ENCODE measurements at regions of chr16 and their contacts with region 1.

Region 1: DNA sequence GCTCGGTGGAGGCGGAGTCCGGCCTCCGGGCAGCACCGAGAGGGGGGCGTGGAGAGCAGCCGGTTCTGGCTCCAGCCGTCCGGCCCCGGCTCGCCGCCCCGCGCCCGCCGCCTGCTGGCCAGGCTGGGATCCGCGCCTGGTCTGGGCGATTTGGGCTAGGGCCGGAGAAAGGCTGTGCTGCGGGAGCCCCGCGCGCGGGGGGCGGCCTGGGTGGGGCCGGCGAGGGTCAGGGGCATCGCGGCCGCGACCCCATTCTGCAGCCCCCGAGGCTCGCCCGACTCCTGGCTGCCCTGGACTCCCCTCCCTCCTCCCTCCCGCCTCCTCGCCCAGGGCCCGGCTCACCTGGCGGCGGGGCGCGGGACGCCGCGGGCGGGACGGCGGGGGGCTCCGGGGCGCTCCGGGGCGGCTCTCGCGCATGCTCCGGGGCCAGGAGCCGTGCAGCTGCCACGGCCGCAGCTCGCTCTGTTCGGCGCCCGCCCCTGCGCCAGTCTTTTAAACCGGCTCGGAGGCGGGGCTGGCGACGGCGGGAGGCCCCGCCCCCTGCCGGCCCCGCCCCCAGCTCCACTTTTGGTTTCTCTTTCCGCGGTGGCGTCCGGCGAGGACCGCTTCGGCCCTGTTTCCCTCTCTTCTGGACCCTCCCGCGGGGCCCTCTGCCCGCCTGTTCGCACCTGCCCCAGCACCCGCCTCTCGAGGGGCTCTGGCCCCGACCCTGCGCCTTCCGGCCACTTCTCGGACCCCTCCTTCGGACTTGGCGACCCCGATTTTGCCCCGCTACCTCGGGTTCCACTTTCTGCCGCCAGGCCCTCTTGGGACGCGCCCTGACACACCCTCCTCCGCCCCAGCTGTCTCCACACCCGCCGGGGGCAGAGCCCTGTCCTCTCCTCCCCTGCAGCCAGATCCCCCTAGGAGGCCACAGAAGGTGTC is at the start of gene SOCS1:
- DNase-seq: peak; percentile 81 to 83
- ATAC-seq: peak; percentile 67 to 75
- H3K4me3 ChIP-seq: peak within 1 kb of the TSS; percentile 81
- H3K27ac ChIP-seq: peak within 1 kb of the TSS; percentile 94 to 95
- H3K4me1 ChIP-seq: 0 out of 3 replicates have a peak, but pooled peaks cover 5% of the 10 kb centered on the region
- CTCF ChIP-seq: peak; percentile 94
- EP300 ChIP-seq: no peak
- POLR2A ChIP-seq: peak; percentile 99
- RAD21 ChIP-seq: peak; percentile 55 to 79
- polyA plus RNA-seq, gene SOCS1: 0.15 and 0.16 TPM in 2 replicates

Region 2: GRCh38 chr16:10964039-10964890 is 291.7 kb before region 1 on chr16:
- CTCF ChIA-PET with region 1: interaction called, 364 read pairs
- POLR2A ChIA-PET with region 1: interaction called, 9 read pairs
- DNase-seq: peak; percentile 70 to 77
- ATAC-seq: peak; percentile 93 to 99
- H3K4me3 ChIP-seq: no peak overlapping the region
- H3K27ac ChIP-seq: no peak overlapping the region
- H3K4me1 ChIP-seq: 0 out of 3 replicates have a peak, but pooled peaks cover 3% of the 10 kb centered on the region
- CTCF ChIP-seq: peak; percentile 93
- EP300 ChIP-seq: no peak
- POLR2A ChIP-seq: no peak
- RAD21 ChIP-seq: peak; percentile 87 to 88

Region 3: DNA sequence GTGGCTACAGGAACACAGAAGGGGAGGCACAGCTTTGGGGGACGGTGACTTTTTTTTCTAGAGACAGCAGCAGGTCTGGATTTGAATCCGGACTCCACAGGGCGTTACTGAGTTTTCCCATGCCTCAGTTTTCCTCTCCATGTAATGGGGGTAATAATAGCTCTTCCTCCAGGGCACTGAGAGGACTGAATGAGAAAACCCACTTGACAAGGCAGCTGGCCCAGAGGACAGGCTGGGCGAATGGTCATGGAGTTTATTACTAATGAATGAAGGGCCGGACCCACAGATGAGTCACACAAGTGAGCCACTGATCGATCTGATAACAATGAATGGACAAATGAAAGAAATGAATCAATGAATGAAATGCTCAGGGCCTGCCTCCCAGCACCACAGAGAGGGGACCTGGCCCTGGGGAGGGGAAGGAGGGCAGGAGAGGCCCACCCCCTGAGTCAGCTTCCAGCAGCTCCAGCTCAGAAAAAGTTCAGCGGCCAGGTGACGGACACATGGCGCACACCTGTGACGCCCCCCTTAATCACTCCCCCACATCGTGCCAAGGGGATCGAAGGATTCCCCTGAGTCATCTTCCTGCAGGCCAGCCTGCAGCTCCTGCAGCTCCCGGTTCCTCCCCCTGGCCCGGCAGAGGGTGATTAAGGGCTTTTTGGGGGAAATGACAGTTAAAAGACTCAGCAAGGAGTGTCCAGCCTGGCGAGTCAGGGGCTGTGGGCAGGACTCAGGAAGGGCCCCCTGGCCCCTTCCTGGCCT is 54.3 kb before region 1 on chr16:
- CTCF ChIA-PET with region 1: interaction called, 19 read pairs
- POLR2A ChIA-PET with region 1: interaction called, 4 read pairs
- DNase-seq: peak in 1 of 2 experiments; percentile 36
- ATAC-seq: peak; percentile 49 to 58
- H3K4me3 ChIP-seq: no peak overlapping the region
- H3K27ac ChIP-seq: peak overlapping the region in 1 of 2 experiments; percentile 72; a peak in 3 of 6 replicates
- H3K4me1 ChIP-seq: peaks cover 22% of the 10 kb centered on the region
- CTCF ChIP-seq: no peak
- EP300 ChIP-seq: no peak
- POLR2A ChIP-seq: no peak
- RAD21 ChIP-seq: no peak

Region 4: GRCh38 chr16:11273721-11274324 is 17.8 kb after region 1 on chr16:
- CTCF ChIA-PET with region 1: interaction called, 66 read pairs
- POLR2A ChIA-PET with region 1: interaction called, 9 read pairs
- DNase-seq: peak in 1 of 2 experiments; percentile 16
- ATAC-seq: peak in 1 of 2 experiments; percentile 18; a peak in 1 of 6 replicates
- H3K4me3 ChIP-seq: no peak overlapping the region
- H3K27ac ChIP-seq: no peak overlapping the region
- H3K4me1 ChIP-seq: no peaks in the 10 kb centered on the region
- CTCF ChIP-seq: no peak
- EP300 ChIP-seq: no peak
- POLR2A ChIP-seq: no peak
- RAD21 ChIP-seq: no peak

Region 5: GRCh38 chr16:11350921-11351335 is 94.9 kb after region 1 on chr16:
- CTCF ChIA-PET with region 1: interaction called, 13 read pairs
- POLR2A ChIA-PET with region 1: interaction called, 9 read pairs
- DNase-seq: no peak
- ATAC-seq: no peak
- H3K4me3 ChIP-seq: no peak overlapping the region
- H3K27ac ChIP-seq: no peak overlapping the region
- H3K4me1 ChIP-seq: peaks cover 5% of the 10 kb centered on the region; the same call in 2 of the 3 replicates
- CTCF ChIP-seq: no peak
- EP300 ChIP-seq: no peak
- POLR2A ChIP-seq: no peak
- RAD21 ChIP-seq: no peak

Region 6: DNA sequence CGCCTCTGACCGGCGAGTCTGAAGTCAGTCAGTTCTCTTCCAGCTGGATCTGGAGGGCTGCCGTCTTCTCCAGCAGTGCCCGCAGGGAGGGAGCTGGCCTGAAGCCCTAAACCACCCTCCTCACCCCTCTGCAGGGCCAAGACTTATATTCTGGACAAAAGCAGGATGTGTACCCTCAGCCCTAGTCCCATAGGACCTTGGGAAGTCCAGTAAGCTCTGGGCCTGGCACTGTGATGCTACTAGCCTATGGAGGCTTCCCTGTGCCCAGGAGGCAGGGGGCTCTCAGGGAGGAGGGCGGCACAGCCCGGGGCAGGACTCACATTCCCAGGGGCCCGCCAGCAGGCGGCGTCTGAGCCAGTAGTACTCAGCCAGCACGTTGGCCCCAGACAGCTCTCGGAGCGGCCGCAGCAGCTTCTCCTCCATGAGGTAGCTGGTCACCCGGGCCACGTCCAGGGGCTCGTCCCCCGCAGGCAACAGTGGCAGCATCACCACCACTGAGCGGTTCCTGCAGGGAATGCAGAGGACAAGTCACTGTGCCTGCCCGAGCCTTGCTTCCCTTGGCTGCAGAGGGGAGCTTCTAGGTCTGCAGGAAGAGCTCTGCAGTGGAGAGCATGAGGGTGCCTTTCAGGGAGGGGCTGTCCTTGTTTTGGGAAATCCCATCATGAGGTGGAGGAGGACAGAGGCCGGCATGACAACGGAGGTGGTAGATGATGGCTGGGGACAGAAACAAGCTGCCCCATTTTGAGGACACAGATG is 131.0 kb after region 1 on chr16:
- CTCF ChIA-PET with region 1: interaction called, 10 read pairs
- POLR2A ChIA-PET with region 1: no interaction called
- DNase-seq: peak; percentile 30 to 60
- ATAC-seq: peak; percentile 70 to 91; a peak in 5 of 6 replicates
- H3K4me3 ChIP-seq: no peak overlapping the region
- H3K27ac ChIP-seq: 0 out of 6 replicates have a peak overlapping the region, but pooled peaks of 1 of the 2 experiments have one; percentile 19
- H3K4me1 ChIP-seq: no peaks in the 10 kb centered on the region
- CTCF ChIP-seq: peak; percentile 45
- EP300 ChIP-seq: no peak
- POLR2A ChIP-seq: no peak
- RAD21 ChIP-seq: peak; percentile 32 to 33; a peak in 2 of 5 replicates

Region 7: DNA sequence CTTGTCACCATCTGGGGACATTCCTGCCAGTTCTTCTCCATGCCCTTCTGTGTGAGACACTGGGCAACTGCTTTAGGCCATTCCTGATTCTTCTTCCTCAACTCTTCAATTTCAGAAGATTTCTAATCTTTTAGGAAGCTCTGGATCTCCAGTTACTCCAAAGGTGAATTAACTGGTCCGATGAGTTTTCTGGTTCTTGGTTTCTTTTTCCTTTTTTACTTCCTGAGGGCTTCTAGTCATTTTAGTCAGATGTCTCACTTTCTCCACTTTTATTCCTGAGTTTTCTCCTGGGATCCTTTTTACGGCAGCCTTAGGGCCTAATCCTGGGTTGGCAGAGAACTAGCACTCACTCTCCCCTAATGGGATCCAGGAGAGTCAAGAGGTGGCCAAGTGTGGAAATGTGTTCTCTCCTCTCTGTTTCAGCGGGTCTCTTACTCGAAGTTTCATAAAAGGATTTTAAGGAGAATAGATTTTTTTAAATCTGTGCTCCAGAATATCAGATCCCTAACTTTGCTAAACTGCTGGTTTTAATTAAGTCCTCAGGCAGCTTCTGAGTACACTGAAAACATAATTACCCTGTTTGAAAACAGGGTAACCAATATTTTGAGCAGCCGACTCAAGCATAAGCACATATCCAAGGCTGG is 196.9 kb after region 1 on chr16:
- CTCF ChIA-PET with region 1: no interaction called
- POLR2A ChIA-PET with region 1: no interaction called
- DNase-seq: no peak
- ATAC-seq: no peak
- H3K4me3 ChIP-seq: no peak overlapping the region
- H3K27ac ChIP-seq: no peak overlapping the region
- H3K4me1 ChIP-seq: no peaks in the 10 kb centered on the region
- CTCF ChIP-seq: no peak
- EP300 ChIP-seq: no peak
- POLR2A ChIP-seq: no peak
- RAD21 ChIP-seq: no peak

Region 8: DNA sequence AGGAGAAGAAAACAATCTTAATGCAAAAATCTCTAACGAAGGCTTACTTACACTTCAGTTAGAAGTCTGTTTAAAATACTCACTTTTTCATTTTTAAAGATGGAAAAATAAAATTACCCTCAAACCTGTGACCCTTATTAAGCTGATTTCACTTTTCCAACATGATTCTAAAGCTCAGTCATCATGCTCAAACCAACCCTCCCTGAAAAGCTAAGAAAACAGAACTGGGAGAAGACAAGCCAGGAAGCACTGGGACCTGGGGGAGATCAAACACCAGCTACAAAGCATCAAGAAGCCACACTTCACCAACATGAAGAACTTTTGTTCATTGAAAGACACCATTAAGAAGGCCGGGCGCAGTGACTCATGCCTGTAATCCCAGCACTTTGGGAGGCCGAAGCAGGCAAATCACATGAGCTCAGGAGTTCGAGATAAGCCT is 241.9 kb after region 1 on chr16:
- CTCF ChIA-PET with region 1: no interaction called
- POLR2A ChIA-PET with region 1: no interaction called
- DNase-seq: peak in 1 of 2 experiments; percentile 81
- ATAC-seq: peak in 1 of 2 experiments; percentile 38; a peak in 3 of 6 replicates
- H3K4me3 ChIP-seq: no peak overlapping the region
- H3K27ac ChIP-seq: peak overlapping the region; percentile 88 to 89
- H3K4me1 ChIP-seq: peaks cover 59% of the 10 kb centered on the region
- CTCF ChIP-seq: no peak
- EP300 ChIP-seq: no peak
- POLR2A ChIP-seq: no peak
- RAD21 ChIP-seq: no peak

Region 9: GRCh38 chr16:11727796-11728543 is 472.0 kb after region 1 on chr16:
- CTCF ChIA-PET with region 1: no interaction called
- POLR2A ChIA-PET with region 1: no interaction called
- DNase-seq: no peak
- ATAC-seq: no peak
- H3K4me3 ChIP-seq: no peak overlapping the region
- H3K27ac ChIP-seq: no peak overlapping the region
- H3K4me1 ChIP-seq: peaks cover 11% of the 10 kb centered on the region; the same call in 2 of the 3 replicates
- CTCF ChIP-seq: no peak
- EP300 ChIP-seq: no peak
- POLR2A ChIP-seq: no peak
- RAD21 ChIP-seq: no peak